Activated T-helper 2 cell treated with anti-CD3 and anti-CD28 coated beads, Interferon-gamma antibody, Interleukin-2, Interleukin-4, amounts not matched to agents 10 μg/mL and 5 μg/mL and 100 μg/mL, durations not matched to agents 14 hours and 24 hours and 36 hours (primary cell): ENCODE measurements at regions of chr7 and their contacts with region 1.

Region 1: GRCh38 chr7:2680792-2681490 is 7.1 kb upstream of the AMZ1 start:
- DNase-seq: peak; percentile 30
- H3K4me3 Mint-ChIP-seq: no peak overlapping the region
- H3K27ac Mint-ChIP-seq: no peak overlapping the region
- H3K4me1 Mint-ChIP-seq: no peaks in the 10 kb centered on the region
- H3K27me3 Mint-ChIP-seq: peaks cover 6% of the 10 kb centered on the region

Region 2: GRCh38 chr7:2477447-2478398 is 203.2 kb before region 1 on chr7:
- intact Hi-C with region 1: loop called (anchors 5 kb)
- DNase-seq: peak; percentile 57
- H3K4me3 Mint-ChIP-seq: no peak overlapping the region
- H3K27ac Mint-ChIP-seq: no peak overlapping the region
- H3K4me1 Mint-ChIP-seq: peaks cover 2% of the 10 kb centered on the region
- H3K27me3 Mint-ChIP-seq: peaks cover 3% of the 10 kb centered on the region

Region 3: GRCh38 chr7:2537981-2538851 is 142.7 kb before region 1 on chr7:
- intact Hi-C with region 1: no loop called
- DNase-seq: no peak
- H3K4me3 Mint-ChIP-seq: no peak overlapping the region
- H3K27ac Mint-ChIP-seq: no peak overlapping the region
- H3K4me1 Mint-ChIP-seq: no peaks in the 10 kb centered on the region
- H3K27me3 Mint-ChIP-seq: no peaks in the 10 kb centered on the region